ENCODE measurements at regions of chr3 and their contacts with region 1.

Region 1: DNA sequence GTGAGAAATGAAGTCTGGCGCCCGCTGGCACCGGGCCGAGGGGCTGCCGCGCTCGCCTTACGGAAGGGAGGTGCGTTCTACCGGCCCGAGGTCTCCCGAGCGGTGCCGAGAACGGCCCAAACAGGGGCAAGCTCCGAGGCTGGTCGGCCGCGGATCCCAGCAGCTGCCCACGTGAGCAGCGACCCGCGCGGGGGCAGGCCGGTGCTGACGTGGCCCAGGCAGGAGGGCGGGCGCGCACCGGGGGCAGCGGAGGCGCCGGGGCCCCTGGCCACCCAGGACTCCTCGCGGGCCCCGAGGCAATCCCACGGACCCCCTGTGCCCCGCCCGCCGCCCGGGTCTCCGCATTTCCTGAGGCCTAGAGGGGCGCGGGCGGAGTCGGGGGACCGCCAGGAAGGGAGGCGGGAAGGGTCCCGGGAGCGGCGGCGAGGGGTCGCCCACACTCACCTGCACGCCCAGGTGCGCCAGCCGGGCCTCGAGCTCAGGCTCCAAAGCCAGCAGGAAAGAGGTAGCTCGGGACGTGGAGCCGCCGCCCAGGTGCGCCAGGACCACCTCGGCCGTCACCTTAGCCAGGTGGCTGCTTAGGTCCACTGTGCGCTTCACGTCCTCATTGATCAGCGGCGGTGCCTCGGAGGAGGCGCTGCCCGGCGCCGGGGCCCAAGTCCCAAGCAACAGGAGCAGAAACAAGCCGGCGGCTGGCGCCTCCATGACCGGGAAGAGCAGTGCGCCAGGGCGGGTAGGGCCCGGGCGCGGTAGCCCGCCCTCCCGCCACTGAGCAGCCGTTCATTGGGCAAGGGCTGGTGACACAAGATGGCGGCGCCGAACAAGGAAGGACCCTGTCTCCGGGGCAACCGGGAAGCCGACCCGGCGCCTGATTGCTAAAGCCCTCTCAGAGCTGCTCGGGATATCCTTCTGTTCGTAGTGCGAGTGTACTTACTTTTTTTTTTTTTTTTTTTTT is at the start of gene RPN1:
- DNase-seq: peak; percentile 96
- H3K4me3 Mint-ChIP-seq: peak within 1 kb of the TSS; percentile 85
- H3K27ac Mint-ChIP-seq: peak within 1 kb of the TSS; percentile 88
- H3K4me1 Mint-ChIP-seq: peaks cover 47% of the 10 kb centered on the region
- H3K27me3 Mint-ChIP-seq: no peaks in the 10 kb centered on the region
- total RNA-seq, gene RPN1: 190 to 192 TPM

Region 2: GRCh38 chr3:128632301-128632700 is 18.1 kb before region 1 on chr3:
- CTCF ChIA-PET with region 1: no interaction called
- POLR2A ChIA-PET with region 1: interaction called, 12 read pairs
- DNase-seq: no peak
- H3K4me3 Mint-ChIP-seq: no peak overlapping the region
- H3K27ac Mint-ChIP-seq: no peak overlapping the region
- H3K4me1 Mint-ChIP-seq: peaks cover 3% of the 10 kb centered on the region
- H3K27me3 Mint-ChIP-seq: no peaks in the 10 kb centered on the region

Region 3: DNA sequence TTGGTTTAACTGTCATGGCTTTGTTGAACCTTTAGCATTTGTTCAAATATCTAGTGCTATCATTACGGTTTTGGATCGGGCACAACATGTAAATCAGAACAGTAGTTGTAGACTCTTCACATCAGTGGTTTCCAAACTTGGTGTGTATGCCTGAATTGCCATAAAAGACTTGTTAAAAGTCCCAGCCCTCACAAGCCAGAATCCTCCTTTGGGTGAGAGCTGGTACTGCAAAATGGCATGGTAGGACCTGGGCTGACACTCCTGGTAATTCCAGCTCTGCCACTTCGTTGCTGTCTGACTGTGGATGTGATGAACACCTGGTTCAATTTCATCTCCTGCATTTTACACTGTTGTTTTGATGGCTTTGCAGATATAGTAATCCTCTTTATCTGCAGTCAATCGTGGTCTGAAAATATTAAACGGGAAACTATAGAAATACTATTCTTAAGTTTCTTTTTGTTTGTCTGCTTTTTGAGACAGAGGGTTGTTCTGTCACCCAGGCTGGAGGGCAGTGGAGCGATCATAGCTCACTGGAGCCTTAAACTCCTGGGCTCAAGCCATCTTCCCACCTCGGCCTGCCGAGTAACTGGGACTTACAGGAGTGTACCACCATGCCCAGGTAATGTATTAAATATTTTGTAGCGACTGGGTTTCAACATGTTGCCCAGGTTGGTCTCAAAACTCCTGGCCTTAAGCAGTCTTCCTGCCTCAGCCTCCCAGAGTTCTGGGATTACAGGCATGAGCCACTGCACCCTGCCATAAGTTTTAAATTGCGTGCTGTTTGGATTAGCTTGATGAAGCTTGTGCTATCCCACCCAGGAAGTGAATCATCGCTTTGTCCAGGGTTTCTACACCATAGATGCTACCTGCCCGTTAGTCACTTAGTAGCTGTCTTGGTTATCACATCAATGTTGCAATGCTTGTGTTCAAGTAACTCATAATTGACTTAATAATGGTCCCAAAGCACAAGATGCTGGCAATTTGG is 137.2 kb after region 1 on chr3:
- CTCF ChIA-PET with region 1: no interaction called
- POLR2A ChIA-PET with region 1: interaction called, 11 read pairs
- DNase-seq: peak; percentile 44
- H3K4me3 Mint-ChIP-seq: peak overlapping the region; percentile 60
- H3K27ac Mint-ChIP-seq: peak overlapping the region; percentile 87
- H3K4me1 Mint-ChIP-seq: peaks cover 74% of the 10 kb centered on the region
- H3K27me3 Mint-ChIP-seq: no peaks in the 10 kb centered on the region

Region 4: DNA sequence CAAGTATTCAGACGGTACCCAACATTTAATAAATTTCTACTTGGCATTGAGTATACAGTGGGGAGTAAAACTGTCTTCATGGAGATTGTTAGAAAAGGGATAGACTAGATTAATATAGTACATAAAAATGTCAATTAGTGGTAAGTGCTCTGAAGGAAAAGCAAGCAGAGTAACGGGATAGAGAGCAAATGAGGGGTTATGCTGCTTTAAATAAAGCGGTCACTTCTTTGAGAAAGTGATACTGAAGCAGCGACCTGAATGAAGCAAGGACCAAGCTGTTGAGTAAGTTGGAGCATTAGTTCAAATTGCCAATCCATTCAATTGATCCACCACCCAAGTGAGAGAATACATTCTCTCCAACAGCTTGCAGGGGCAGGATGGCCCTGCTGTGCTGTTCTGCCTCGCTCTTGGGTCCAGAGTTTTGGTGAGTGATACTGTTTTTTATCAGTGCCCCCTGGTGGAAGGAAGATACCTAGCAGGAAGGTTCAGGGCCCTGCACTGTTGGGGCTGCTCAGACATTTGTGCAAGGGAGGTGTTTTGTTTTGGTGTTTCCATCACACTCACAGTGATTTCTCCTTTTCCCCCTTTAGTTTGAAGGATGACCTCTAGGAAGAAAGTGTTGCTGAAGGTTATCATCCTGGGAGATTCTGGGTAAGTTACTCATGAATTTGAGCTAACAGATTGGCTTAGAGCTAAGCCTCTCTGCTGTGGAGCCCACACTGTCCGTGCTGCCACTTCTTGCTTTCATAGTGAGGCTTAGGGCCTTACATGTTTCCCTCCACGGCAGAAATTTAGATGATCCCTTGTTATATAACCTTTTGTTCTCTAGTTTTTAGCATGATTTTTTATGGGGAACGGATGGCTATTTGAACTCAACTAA is 144.6 kb after region 1 on chr3:
- CTCF ChIA-PET with region 1: interaction called, 11 read pairs
- POLR2A ChIA-PET with region 1: interaction called, 11 read pairs
- DNase-seq: peak; percentile 71
- H3K4me3 Mint-ChIP-seq: no peak overlapping the region
- H3K27ac Mint-ChIP-seq: peak overlapping the region; percentile 77
- H3K4me1 Mint-ChIP-seq: peaks cover 72% of the 10 kb centered on the region
- H3K27me3 Mint-ChIP-seq: no peaks in the 10 kb centered on the region

Region 5: GRCh38 chr3:128804017-128804810 is 153.8 kb after region 1 on chr3:
- CTCF ChIA-PET with region 1: no interaction called
- POLR2A ChIA-PET with region 1: interaction called, 10 read pairs
- DNase-seq: peak; percentile 70
- H3K4me3 Mint-ChIP-seq: peak overlapping the region; percentile 70
- H3K27ac Mint-ChIP-seq: peak overlapping the region; percentile 93
- H3K4me1 Mint-ChIP-seq: peaks cover 69% of the 10 kb centered on the region
- H3K27me3 Mint-ChIP-seq: no peaks in the 10 kb centered on the region